Aorta (tissue), 5 donors: ENCODE measurements at regions of chr6 and their contacts with region 1.

Region 1: GRCh38 chr6:147506704-147507114 is 1.8 kb upstream of the SAMD5 start:
- DNase-seq: peak; percentile 75 to 94
- ATAC-seq: peak; percentile 85
- H3K4me3 ChIP-seq: no peak overlapping the region
- H3K27ac ChIP-seq: no peak overlapping the region
- H3K4me1 ChIP-seq: no peaks in the 10 kb centered on the region
- H3K27me3 ChIP-seq: no peaks in the 10 kb centered on the region

Region 2: GRCh38 chr6:147438758-147439528 is 67.8 kb before region 1 on chr6:
- intact Hi-C with region 1: no loop called
- DNase-seq: no peak
- ATAC-seq: no peak
- H3K4me3 ChIP-seq: no peak overlapping the region
- H3K27ac ChIP-seq: no peak overlapping the region
- H3K4me1 ChIP-seq: no peaks in the 10 kb centered on the region
- H3K27me3 ChIP-seq: no peaks in the 10 kb centered on the region

Region 3: DNA sequence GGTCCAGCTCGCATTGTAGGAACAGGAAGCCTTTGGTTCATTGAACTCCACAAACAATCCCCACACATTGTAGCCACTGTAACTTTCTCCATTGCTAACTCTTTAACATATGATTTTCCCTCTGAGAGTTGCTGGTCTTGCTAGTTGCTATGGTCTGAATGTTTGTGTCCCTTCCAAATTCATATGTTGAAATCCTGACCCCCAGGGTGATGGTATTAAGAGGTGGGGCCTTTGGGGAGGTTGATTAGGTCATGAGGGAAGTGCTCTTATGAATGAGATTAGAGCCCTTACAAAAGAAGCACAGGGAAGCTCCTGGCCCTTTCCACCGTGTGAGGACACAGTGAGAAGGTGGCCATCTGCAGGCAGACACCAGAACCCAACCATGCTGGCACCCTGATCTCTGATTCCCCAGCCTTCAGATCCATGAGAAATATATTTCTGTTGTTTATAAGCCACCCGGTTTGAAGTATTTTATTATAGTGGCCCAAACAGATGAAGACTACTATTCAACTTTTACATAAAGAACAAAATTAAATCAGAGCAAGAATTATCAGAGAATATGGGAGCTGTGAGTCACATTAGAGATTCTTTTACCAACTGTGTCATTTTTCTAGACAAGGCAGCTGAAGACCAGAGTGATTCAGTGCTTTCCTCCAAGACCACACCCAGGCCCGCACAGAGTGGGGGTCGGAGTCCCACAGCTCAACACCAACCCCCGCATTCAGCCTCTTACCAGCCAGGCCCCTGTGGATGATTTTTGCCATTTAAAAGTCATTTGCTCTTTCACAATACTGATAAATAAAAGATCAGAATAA is 144.7 kb after region 1 on chr6:
- intact Hi-C with region 1: loop called in 1 of 2 experiments (anchors 10 kb)
- DNase-seq: no peak
- ATAC-seq: no peak
- H3K4me3 ChIP-seq: no peak overlapping the region
- H3K27ac ChIP-seq: no peak overlapping the region
- H3K4me1 ChIP-seq: no peaks in the 10 kb centered on the region
- H3K27me3 ChIP-seq: no peaks in the 10 kb centered on the region

Region 4: DNA sequence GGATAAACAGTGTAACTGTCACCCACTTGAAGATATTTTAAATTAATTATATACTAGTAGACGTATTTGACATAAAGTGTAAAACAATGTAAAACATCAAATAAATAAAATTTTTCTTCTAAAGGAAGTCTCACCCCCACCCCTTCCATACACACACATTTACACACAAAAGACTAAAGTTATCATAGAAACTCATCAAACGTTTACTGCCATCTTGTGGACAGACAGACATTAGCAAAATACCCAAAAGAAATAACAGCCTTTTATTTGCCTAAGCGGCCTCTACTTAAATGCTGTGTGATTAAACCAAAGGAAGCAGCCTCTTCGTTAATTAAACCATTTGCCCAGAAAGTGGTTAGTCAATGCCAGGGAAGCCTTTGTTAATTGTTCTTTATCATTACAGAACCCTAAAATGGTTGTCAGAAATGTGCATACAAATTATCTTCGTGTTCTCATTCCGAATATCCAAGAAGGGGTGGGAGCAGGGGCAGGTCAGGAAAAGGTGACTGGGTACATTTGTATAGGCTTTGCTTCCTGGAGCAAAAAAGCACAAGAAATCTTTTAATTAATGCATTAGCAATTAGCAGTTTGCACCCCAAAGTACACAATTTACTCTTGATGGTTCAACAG is 659.7 kb after region 1 on chr6:
- intact Hi-C with region 1: loop called (anchors 1 to 2 kb)
- DNase-seq: no peak
- ATAC-seq: no peak
- H3K4me3 ChIP-seq: no peak overlapping the region
- H3K27ac ChIP-seq: no peak overlapping the region
- H3K4me1 ChIP-seq: no peaks in the 10 kb centered on the region
- H3K27me3 ChIP-seq: no peaks in the 10 kb centered on the region

Region 5: DNA sequence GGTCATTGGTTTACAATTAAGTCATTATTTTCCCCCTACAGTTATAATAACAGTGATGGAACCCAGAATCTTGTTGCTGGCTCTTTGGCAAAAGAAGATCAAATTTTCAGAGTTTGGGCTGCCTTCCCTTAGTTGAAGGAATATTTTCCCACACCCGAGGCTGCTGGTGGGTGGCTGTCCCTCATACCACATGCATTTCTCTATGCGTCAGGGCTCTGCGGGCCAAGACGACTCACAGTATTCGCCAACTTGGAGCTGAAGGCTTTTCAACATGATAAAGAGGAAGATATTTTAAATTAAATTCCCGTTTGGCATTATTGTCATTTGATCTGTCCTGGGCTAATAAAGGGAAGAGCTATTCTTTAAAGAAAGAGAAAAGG is 733.7 kb after region 1 on chr6:
- intact Hi-C with region 1: loop called in 1 of 2 experiments (anchors 10 kb)
- DNase-seq: peak; percentile 73 to 81
- ATAC-seq: peak; percentile 71
- H3K4me3 ChIP-seq: no peak overlapping the region
- H3K27ac ChIP-seq: peak overlapping the region; percentile 6 to 9
- H3K4me1 ChIP-seq: peaks cover 10 to 19% of the 10 kb centered on the region in 2 donors
- H3K27me3 ChIP-seq: no peaks in the 10 kb centered on the region